CD8-positive, alpha-beta memory T cell (primary cell): ENCODE measurements at regions of chr2 and their contacts with region 1.

Region 1: GRCh38 chr2:28870146-28870891 is at the start of gene TRMT61B:
- DNase-seq: peak; percentile 94 to 97 (median 95)
- H3K4me3 ChIP-seq: peak within 1 kb of the TSS; percentile 100
- H3K4me3 Mint-ChIP-seq: peak within 1 kb of the TSS; percentile 94 to 100 (median 97)
- H3K27ac ChIP-seq: peak within 1 kb of the TSS; percentile 96
- H3K27ac Mint-ChIP-seq: peak within 1 kb of the TSS; percentile 98 to 100 (median 100)
- H3K4me1 ChIP-seq: peaks cover 34% of the 10 kb centered on the region
- H3K4me1 Mint-ChIP-seq: peaks cover 41 to 44% (median 42%) of the 10 kb centered on the region in 3 donors
- H3K27me3 ChIP-seq: peaks cover under 1% of the 10 kb centered on the region
- H3K27me3 Mint-ChIP-seq: peaks cover 3% of the 10 kb centered on the region in 2 donors
- total RNA-seq, gene TRMT61B: 18.3 to 20.2 TPM

Region 2: DNA sequence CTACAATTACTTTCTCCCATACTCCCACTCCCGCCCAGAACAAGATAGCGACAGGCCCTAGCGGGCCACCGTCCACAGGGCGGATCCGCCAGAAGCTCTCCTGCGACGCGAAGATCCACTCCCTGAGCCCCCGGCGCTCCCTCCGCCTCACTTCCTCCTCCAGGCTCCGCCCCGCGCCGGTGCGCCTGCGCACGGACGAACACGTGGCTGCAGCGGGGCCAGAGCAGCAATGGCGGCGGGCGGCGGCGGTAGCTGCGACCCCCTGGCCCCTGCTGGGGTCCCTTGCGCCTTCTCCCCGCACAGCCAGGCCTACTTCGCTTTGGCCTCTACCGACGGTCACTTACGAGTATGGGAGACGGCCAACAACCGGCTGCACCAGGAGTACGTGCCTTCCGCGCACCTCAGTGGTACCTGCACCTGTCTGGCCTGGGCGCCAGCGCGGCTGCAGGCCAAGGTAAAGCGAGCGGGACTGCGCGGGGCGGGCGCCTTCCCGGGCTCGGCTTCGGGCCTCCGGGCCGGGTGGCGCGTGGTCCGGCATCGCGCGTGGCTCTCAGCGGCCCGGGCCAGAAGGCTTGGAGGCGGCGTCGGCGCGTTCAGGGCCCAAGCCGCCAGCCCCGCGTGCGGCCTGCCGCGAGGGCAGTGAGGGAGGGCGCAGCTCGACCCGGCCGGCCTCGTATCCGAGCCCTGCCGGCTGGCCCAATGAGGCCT is 24.3 kb after region 1 on chr2 and contains the start of gene WDR43:
- CTCF ChIA-PET with region 1: interaction called, 9 read pairs
- POLR2A ChIA-PET with region 1: interaction called, 72 read pairs
- DNase-seq: peak; percentile 96 to 98 (median 97)
- H3K4me3 ChIP-seq: peak within 1 kb of the TSS; percentile 84
- H3K4me3 Mint-ChIP-seq: peak within 1 kb of the TSS; percentile 91 to 97 (median 94)
- H3K27ac ChIP-seq: peak within 1 kb of the TSS; percentile 81
- H3K27ac Mint-ChIP-seq: peak within 1 kb of the TSS; percentile 79 to 97 (median 94)
- H3K4me1 ChIP-seq: peaks cover 40% of the 10 kb centered on the region
- H3K4me1 Mint-ChIP-seq: peaks cover 47 to 49% (median 48%) of the 10 kb centered on the region in 3 donors
- H3K27me3 ChIP-seq: no peaks in the 10 kb centered on the region
- H3K27me3 Mint-ChIP-seq: no peaks in the 10 kb centered on the region
- total RNA-seq, gene WDR43: 169 to 186 TPM

Region 3: DNA sequence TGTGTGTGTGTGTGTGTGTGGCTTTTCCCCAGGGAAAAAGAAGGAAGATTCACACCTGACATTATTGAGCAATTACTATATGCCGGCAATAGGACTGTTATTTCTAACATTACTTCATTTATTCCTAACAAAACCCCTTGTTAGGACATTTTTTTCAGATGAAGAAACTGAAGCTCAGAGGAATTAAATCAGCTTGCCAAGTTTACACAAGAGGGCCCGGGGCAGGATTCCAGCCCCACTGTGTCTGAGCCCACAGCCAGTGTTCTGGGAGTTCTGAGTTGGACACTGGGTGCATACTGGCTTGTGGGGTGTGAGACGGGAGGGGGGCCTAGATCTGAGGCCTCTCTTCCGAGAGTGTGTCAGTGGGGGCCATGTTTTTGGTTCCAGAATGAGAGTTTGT is 120.7 kb after region 1 on chr2:
- CTCF ChIA-PET with region 1: no interaction called
- POLR2A ChIA-PET with region 1: no interaction called
- DNase-seq: no peak
- H3K4me3 ChIP-seq: no peak overlapping the region
- H3K4me3 Mint-ChIP-seq: no peak overlapping the region
- H3K27ac ChIP-seq: no peak overlapping the region
- H3K27ac Mint-ChIP-seq: peak overlapping the region in 4 of 8 donors; percentile 30 to 68 (median 34)
- H3K4me1 ChIP-seq: no peaks in the 10 kb centered on the region
- H3K4me1 Mint-ChIP-seq: peaks cover 0 to 10% (median 9%) of the 10 kb centered on the region in 3 donors
- H3K27me3 ChIP-seq: no peaks in the 10 kb centered on the region
- H3K27me3 Mint-ChIP-seq: no peaks in the 10 kb centered on the region